Dendritic cell treated with granulocyte-macrophage colony-stimulating factor and Interleukin-4, amounts not matched to agents 40 ng/mL and 50 ng/mL, for 4 days (primary cell): ENCODE measurements at regions of chr11 and their contacts with region 1.

Region 1: GRCh38 chr11:64652586-64653387 is 61.8 kb downstream of the SLC22A12 start:
- H3K4me3 Mint-ChIP-seq: no peak overlapping the region
- H3K27ac Mint-ChIP-seq: no peak overlapping the region
- H3K4me1 Mint-ChIP-seq: peaks cover 56% of the 10 kb centered on the region
- H3K27me3 Mint-ChIP-seq: peaks cover 11% of the 10 kb centered on the region

Region 2: DNA sequence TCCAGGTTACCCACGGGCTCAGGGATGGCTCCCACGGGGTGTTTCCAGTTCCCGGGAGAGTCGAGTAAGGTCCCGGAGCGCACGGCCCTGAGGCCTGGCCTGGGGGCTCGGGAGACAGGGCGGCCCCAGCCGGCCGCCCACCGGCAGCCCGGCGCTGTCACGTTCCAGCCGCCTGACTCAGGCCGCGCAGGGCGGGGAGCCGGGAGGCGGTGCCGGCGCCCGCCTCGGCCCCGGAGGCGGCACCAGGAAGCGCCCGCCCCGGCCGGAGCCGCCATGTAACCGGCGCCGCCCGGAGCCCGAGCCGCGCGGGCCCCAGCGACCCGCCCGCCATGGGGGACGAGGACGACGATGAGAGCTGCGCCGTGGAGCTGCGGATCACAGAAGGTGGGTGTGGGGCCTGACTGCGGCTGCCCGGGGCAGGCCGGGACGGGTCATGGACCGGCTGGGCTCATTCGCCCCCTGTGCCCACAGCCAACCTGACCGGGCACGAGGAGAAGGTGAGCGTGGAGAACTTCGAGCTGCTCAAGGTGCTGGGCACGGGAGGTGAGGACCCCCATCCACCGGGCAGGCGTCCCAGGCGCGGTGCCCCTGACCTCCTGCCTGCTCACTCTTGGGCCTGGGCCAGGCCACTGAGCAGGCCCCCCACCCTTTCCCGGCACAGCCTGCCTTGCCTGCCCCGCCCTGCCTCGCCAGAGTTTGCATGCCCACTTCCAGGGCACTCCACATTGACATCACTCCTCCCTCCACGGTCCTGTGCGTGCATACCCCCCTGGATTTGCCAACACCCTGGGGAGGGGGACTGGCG is 293.7 kb before region 1 on chr11 and contains the start of gene RPS6KA4:
- intact Hi-C with region 1: loop called (anchors 10 kb)
- H3K4me3 Mint-ChIP-seq: peak within 1 kb of the TSS; percentile 93
- H3K27ac Mint-ChIP-seq: peak within 1 kb of the TSS; percentile 80
- H3K4me1 Mint-ChIP-seq: peaks cover 61% of the 10 kb centered on the region
- H3K27me3 Mint-ChIP-seq: no peaks in the 10 kb centered on the region

Region 3: DNA sequence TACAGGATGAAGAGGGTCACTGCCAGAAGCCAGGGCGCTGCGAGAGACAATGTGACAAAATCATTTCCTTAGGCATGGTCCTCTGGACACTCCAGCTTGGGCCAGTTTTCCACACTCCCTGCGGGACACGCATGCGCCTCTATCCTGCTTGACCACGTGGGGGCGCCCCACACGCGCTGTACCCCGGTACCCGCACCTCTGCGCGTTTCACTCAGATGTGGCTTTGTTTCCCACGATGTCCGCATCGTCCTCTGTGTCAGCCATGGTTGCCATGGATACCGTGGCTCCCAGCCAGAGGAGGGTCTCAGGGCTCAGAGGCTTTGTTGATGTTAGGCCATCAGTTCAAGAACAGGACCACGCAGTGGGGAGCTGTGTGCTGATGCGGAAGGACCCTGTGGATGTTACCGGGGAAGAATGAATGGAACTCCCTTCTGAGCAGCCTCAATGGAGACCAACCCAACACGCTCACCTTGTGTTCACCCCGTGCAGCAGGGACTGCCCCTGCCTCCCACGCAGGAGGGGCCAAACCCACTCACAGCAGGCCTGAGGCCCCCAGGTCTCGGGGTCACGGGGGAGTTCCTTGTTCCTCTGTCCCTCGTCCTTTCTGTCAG is 162.9 kb before region 1 on chr11:
- intact Hi-C with region 1: loop called (anchors 5 kb)
- H3K4me3 Mint-ChIP-seq: no peak overlapping the region
- H3K27ac Mint-ChIP-seq: no peak overlapping the region
- H3K4me1 Mint-ChIP-seq: peaks cover 31% of the 10 kb centered on the region
- H3K27me3 Mint-ChIP-seq: peaks cover 13% of the 10 kb centered on the region

Region 4: DNA sequence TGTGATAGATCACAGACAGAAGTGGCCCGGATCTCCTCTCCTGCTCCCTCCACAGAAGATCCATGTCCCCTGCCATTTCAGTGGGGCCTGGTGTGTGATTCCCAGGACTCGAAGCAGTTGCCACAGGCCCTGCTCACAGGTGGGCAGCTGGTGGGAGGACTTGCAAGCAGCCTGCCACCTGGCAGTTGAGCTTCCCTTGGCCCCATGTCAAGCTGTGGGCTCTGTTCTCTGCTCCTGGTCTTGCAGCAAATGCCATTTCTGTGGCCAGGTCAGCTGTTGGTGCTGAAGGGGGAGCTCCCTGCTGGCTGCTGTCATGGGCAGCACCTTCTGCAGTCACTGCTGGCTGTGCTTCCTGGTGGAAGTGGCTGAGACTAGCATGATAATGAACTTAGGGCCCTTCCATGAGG is 120.9 kb before region 1 on chr11:
- intact Hi-C with region 1: no loop called
- H3K4me3 Mint-ChIP-seq: no peak overlapping the region
- H3K27ac Mint-ChIP-seq: no peak overlapping the region
- H3K4me1 Mint-ChIP-seq: no peaks in the 10 kb centered on the region
- H3K27me3 Mint-ChIP-seq: peaks cover 4% of the 10 kb centered on the region

Region 5: GRCh38 chr11:64553551-64554201 is 99.1 kb before region 1 on chr11:
- intact Hi-C with region 1: loop called (anchors 1 kb)
- H3K4me3 Mint-ChIP-seq: no peak overlapping the region
- H3K27ac Mint-ChIP-seq: no peak overlapping the region
- H3K4me1 Mint-ChIP-seq: peaks cover 20% of the 10 kb centered on the region
- H3K27me3 Mint-ChIP-seq: peaks cover 12% of the 10 kb centered on the region

Region 6: GRCh38 chr11:64723117-64723906 is 70.5 kb after region 1 on chr11 and contains the start of gene NRXN2:
- intact Hi-C with region 1: loop called (anchors 2 kb)
- H3K4me3 Mint-ChIP-seq: peak within 1 kb of the TSS; percentile 71
- H3K27ac Mint-ChIP-seq: no peak within 1 kb of the TSS
- H3K4me1 Mint-ChIP-seq: peaks cover 23% of the 10 kb centered on the region
- H3K27me3 Mint-ChIP-seq: peaks cover 43% of the 10 kb centered on the region